Astrocyte of the cerebellum (primary cell): ENCODE measurements at regions of chr4 and their contacts with region 1.

Region 1: GRCh38 chr4:179509489-179509888 is 2067.3 kb upstream of the AGA start:
- DNase-seq: no peak
- H3K4me3 ChIP-seq: no peak overlapping the region
- CTCF ChIP-seq: no peak

Region 2: GRCh38 chr4:179447308-179447707 is 62.2 kb before region 1 on chr4:
- in situ Hi-C with region 1: loop called (anchors 5 kb)
- DNase-seq: peak; percentile 51
- H3K4me3 ChIP-seq: no peak overlapping the region
- CTCF ChIP-seq: no peak